ENCODE measurements at regions of chr10 and their contacts with region 1.

Region 1: DNA sequence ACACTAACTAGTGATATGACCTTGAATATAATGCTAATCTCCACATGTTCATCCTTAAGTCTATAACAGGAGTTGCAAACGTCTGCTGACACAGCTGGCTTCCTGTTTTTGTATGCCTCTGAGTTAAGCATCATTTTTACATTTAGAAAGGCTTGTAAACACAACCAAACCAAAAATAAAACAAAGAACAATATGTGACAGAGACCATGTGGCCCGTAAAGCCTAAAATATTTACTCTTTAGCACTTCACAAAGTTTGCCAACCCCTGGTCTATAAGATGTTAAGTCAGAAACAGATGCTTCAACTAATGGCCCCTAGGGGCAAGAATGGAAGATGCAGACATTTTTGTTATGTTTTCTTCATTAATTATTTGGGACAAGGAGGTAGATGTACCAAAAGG is 109.3 kb downstream of the CPEB3 start:
- DNase-seq: no peak
- ATAC-seq: peak; percentile 72
- H3K4me3 ChIP-seq: no peak overlapping the region
- H3K27ac ChIP-seq: no peak overlapping the region
- H3K4me1 ChIP-seq: no peaks in the 10 kb centered on the region
- H3K27me3 ChIP-seq: no peaks in the 10 kb centered on the region
- CTCF ChIP-seq: peak in 2 of 3 experiments; percentile 6 to 15; a peak in 1 of 6 replicates
- EP300 ChIP-seq: no peak
- POLR2A ChIP-seq: no peak
- RAD21 ChIP-seq: 0 out of 2 replicates have a peak, but pooled peaks have one; percentile 15

Region 2: DNA sequence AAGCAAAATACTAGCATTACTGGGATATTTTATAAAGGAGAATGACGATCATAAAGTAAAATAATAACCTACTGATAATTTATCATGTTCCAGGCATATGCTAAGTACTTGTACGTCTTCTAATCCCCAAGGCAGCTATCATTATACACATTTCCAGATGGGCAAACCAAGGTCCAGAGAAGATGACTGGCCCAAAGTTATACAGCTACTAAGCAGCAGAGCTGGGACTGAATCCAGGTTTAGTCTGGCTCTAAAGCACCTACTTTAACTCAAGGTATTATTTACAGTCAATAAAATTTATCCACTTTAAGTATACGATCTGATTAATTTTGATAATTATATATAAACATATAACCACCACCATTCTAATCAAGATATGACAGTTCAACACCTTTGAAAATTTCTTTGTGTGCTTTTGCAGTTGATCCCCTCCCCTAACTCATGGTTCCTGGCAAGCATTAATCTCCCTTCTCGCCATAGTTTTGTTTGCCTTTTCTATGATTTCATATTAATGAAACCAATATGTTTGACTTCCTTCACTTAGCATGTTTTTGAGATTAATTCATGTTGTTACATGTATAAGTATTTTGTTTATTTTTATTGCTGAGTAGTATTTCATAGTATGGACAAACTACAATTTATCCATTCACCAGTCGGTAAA is 17.4 kb before region 1 on chr10:
- CTCF ChIA-PET with region 1: no interaction called
- POLR2A ChIA-PET with region 1: interaction called, 4 read pairs
- RAD21 ChIA-PET with region 1: no interaction called
- SMC1A ChIA-PET with region 1: interaction called, 3 read pairs
- in situ Hi-C with region 1: no loop called
- intact Hi-C with region 1: loop called (anchors 2 kb)
- DNase-seq: no peak
- ATAC-seq: no peak
- H3K4me3 ChIP-seq: no peak overlapping the region
- H3K27ac ChIP-seq: no peak overlapping the region
- H3K4me1 ChIP-seq: no peaks in the 10 kb centered on the region
- H3K27me3 ChIP-seq: no peaks in the 10 kb centered on the region
- CTCF ChIP-seq: no peak
- EP300 ChIP-seq: no peak
- POLR2A ChIP-seq: no peak
- RAD21 ChIP-seq: no peak

Region 3: GRCh38 chr10:92342796-92343195 is 161.2 kb after region 1 on chr10:
- CTCF ChIA-PET with region 1: no interaction called
- POLR2A ChIA-PET with region 1: no interaction called
- RAD21 ChIA-PET with region 1: no interaction called
- SMC1A ChIA-PET with region 1: no interaction called
- in situ Hi-C with region 1: no loop called
- intact Hi-C with region 1: no loop called
- DNase-seq: no peak
- ATAC-seq: no peak
- H3K4me3 ChIP-seq: no peak overlapping the region
- H3K27ac ChIP-seq: no peak overlapping the region
- H3K4me1 ChIP-seq: no peaks in the 10 kb centered on the region
- H3K27me3 ChIP-seq: no peaks in the 10 kb centered on the region
- CTCF ChIP-seq: no peak
- EP300 ChIP-seq: no peak
- POLR2A ChIP-seq: no peak
- RAD21 ChIP-seq: no peak

Region 4: GRCh38 chr10:92432596-92432995 is 251.0 kb after region 1 on chr10:
- CTCF ChIA-PET with region 1: no interaction called
- POLR2A ChIA-PET with region 1: no interaction called
- RAD21 ChIA-PET with region 1: no interaction called
- SMC1A ChIA-PET with region 1: no interaction called
- in situ Hi-C with region 1: no loop called
- intact Hi-C with region 1: loop called (anchors 10 kb)
- DNase-seq: no peak
- ATAC-seq: no peak
- H3K4me3 ChIP-seq: no peak overlapping the region
- H3K27ac ChIP-seq: no peak overlapping the region
- H3K4me1 ChIP-seq: no peaks in the 10 kb centered on the region
- H3K27me3 ChIP-seq: no peaks in the 10 kb centered on the region
- CTCF ChIP-seq: no peak
- EP300 ChIP-seq: no peak
- POLR2A ChIP-seq: no peak
- RAD21 ChIP-seq: no peak

Region 5: DNA sequence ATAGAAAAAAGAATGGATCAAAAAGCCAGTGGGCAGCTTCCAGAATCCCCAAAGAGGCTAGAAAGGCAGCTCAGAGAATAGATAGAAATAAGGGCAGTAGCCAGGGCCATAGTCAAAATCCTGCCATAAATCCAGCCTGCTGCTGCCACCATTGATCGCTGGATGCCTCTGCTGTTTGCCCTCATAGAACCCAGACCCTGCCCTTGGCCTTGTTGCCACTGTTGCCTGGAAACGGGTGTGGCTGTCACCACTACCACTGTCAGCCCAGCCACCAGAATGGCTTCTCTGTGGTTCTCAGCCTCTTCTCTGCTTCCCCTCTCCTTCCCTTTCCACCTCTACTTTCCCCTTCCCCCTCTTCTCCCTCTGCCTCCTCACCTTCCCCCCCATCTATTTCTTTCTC is 566.0 kb after region 1 on chr10:
- CTCF ChIA-PET with region 1: no interaction called
- POLR2A ChIA-PET with region 1: no interaction called
- RAD21 ChIA-PET with region 1: no interaction called
- SMC1A ChIA-PET with region 1: no interaction called
- in situ Hi-C with region 1: no loop called
- intact Hi-C with region 1: no loop called
- DNase-seq: no peak
- ATAC-seq: peak; percentile 56
- H3K4me3 ChIP-seq: no peak overlapping the region
- H3K27ac ChIP-seq: no peak overlapping the region
- H3K4me1 ChIP-seq: peaks cover 19% of the 10 kb centered on the region
- H3K27me3 ChIP-seq: no peaks in the 10 kb centered on the region; a peak in 3 of 4 replicates
- CTCF ChIP-seq: no peak
- EP300 ChIP-seq: no peak
- POLR2A ChIP-seq: no peak
- RAD21 ChIP-seq: no peak

Region 6: DNA sequence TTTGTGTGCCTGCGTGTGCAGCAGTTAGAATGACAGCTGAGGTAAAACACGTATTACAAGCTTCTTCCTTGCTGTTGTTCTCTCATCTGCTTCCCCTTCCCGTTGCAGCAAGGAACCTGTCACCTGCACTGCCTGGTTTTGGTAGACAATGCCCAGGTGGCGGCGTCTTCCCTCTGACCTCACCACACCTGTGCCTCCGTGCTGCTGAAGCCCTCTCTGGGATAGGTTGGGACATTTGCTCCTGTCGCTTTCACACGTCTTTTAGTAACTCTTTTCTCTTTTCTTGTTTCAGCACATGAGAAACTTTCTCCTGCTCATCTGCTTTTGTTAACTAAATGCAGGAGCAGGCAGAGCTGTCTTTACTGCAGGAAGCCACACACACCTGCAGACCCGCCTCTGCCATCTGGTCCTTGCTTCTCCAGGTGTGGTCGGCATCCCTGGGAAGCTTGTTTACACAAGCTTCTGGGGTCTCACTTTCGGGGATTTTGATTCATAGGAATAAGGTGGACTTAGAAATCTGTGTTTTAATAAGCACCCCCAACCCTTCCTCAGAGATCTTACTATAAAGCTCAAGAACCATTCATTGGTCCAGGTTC is 606.1 kb after region 1 on chr10:
- CTCF ChIA-PET with region 1: no interaction called
- POLR2A ChIA-PET with region 1: no interaction called
- RAD21 ChIA-PET with region 1: no interaction called
- SMC1A ChIA-PET with region 1: no interaction called
- in situ Hi-C with region 1: no loop called
- intact Hi-C with region 1: no loop called
- DNase-seq: no peak
- ATAC-seq: no peak
- H3K4me3 ChIP-seq: no peak overlapping the region
- H3K27ac ChIP-seq: no peak overlapping the region
- H3K4me1 ChIP-seq: no peaks in the 10 kb centered on the region
- H3K27me3 ChIP-seq: peaks cover 0 to 5% of the 10 kb centered on the region in 2 experiments; a peak in 3 of 4 replicates
- CTCF ChIP-seq: no peak
- EP300 ChIP-seq: no peak
- POLR2A ChIP-seq: no peak
- RAD21 ChIP-seq: no peak